Activated CD4-positive, alpha-beta T cell treated with anti-CD3 and anti-CD28 coated beads, Interleukin-2, amount 10 ng/mL, durations not matched to agents 24 days and 14 days (primary cell): ENCODE measurements at regions of chr14 and their contacts with region 1.

Region 1: GRCh38 chr14:36580856-36581831 is 1.3 kb downstream of the NKX2-8 start:
- DNase-seq: peak; percentile 60
- H3K4me3 Mint-ChIP-seq: no peak overlapping the region
- H3K27ac Mint-ChIP-seq: no peak overlapping the region
- H3K4me1 Mint-ChIP-seq: no peaks in the 10 kb centered on the region
- H3K27me3 Mint-ChIP-seq: peaks cover 61% of the 10 kb centered on the region

Region 2: DNA sequence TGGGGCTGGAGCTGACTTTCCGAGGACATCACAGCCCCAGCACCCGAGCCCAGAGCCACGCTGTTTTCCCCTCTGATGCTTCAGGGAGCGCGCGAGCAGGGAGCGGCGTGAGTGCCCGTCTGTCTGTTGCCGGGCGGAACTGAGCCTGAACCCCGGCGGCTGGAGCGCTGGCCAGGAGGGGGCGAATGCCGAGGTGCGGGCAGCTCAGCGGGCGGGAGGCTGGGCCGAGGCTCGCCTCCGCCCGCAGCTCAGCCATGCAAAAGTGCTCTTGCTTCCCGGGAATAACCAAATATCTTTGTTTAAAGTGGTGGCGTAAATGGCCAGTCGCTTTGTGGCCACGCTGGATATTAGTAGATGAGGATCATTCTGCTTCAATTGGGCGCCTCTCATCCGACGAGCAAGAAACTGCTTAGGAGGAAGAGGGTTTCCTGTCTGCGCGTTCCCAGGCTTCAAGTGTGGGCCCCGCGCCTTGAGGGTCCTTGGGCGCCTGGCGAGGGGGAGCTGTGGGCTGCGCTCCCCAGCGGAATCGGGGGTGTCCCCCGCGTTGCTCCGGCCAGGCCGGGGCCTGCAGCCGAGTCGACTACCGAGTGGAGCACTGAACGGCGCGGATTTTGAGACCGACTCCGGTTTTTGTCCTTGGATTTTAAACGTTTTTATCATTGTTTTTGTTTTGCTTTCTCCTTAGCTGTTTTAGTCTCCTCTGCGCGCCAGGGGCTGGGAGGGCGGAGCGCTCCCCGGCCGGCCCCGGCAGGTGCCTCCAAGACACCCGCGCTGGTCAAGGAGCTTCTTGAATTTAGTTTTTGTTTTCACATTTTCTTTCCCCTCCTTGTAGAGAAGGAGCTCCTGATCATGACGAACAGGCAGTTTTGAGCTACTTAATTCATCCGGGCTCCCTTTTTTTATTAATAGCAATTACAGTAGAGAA is 60.3 kb before region 1 on chr14:
- intact Hi-C with region 1: loop called (anchors 5 kb)
- DNase-seq: no peak
- H3K4me3 Mint-ChIP-seq: no peak overlapping the region
- H3K27ac Mint-ChIP-seq: no peak overlapping the region
- H3K4me1 Mint-ChIP-seq: peaks cover 2% of the 10 kb centered on the region
- H3K27me3 Mint-ChIP-seq: peaks cover 71% of the 10 kb centered on the region

Region 3: DNA sequence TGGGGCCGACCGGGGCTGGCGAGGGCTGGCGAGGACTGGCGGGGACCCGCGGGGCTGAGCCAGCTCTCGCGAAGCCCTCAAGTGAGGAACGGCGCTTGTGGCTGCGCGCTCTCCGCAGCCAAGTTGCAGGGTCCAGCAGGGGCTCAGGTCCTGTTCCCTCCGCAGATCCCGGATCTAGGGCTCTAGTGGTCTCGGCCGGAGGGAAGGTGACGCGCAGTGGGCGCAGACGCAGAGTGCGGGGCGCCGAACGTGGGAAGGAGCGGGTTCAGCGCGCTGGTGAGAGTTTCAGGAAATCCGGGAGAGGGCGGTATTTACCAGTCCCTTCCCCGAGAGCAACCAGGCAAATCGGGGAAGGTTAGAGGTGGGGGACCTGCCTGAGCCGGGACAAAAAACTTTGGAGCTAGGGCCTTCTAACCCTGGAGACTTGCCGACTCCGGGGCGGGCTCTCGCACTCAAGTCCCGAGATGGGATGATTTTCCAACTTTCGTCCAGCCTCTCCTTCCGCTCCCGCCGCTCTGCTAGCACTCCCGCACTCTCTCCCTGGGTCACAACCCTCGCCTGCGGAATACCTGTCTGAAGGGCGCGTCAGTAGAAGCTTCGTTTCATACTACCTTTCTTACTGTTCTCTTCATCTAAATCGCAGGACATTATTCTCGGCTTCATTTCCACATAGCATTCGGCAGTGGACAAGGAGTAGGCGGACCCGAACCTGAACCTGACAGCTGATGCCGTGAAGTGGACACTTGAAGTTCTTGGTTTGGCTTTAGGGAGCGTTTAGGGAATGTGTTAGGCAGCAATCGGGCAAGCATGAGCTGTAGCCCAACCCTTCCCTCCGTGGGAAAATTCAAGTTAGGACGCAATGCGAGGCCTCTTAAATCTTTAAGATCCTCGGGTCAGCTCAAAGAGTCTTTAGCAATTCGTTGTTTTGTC is 66.9 kb after region 1 on chr14:
- intact Hi-C with region 1: loop called (anchors 2 kb)
- DNase-seq: no peak
- H3K4me3 Mint-ChIP-seq: no peak overlapping the region
- H3K27ac Mint-ChIP-seq: peak overlapping the region; percentile 25
- H3K4me1 Mint-ChIP-seq: no peaks in the 10 kb centered on the region
- H3K27me3 Mint-ChIP-seq: peaks cover 57% of the 10 kb centered on the region

Region 4: GRCh38 chr14:36661756-36662498 is 80.8 kb after region 1 on chr14 and contains the start of gene PAX9:
- intact Hi-C with region 1: loop called (anchors 1 kb)
- DNase-seq: peak; percentile 64
- H3K4me3 Mint-ChIP-seq: peak within 1 kb of the TSS; percentile 15
- H3K27ac Mint-ChIP-seq: peak within 1 kb of the TSS; percentile 65
- H3K4me1 Mint-ChIP-seq: peaks cover 10% of the 10 kb centered on the region
- H3K27me3 Mint-ChIP-seq: peaks cover 87% of the 10 kb centered on the region
- total RNA-seq, gene PAX9: not detected in 2 replicates

Region 5: GRCh38 chr14:37594238-37594914 is 1013.2 kb after region 1 on chr14:
- intact Hi-C with region 1: loop called (anchors 5 kb)
- DNase-seq: peak; percentile 70
- H3K4me3 Mint-ChIP-seq: peak overlapping the region; percentile 62
- H3K27ac Mint-ChIP-seq: peak overlapping the region; percentile 76
- H3K4me1 Mint-ChIP-seq: peaks cover 9% of the 10 kb centered on the region
- H3K27me3 Mint-ChIP-seq: peaks cover 72% of the 10 kb centered on the region

Region 6: GRCh38 chr14:38210587-38211216 is 1629.6 kb after region 1 on chr14:
- intact Hi-C with region 1: loop called (anchors 10 kb)
- DNase-seq: no peak
- H3K4me3 Mint-ChIP-seq: no peak overlapping the region
- H3K27ac Mint-ChIP-seq: no peak overlapping the region
- H3K4me1 Mint-ChIP-seq: peaks cover 3% of the 10 kb centered on the region
- H3K27me3 Mint-ChIP-seq: peaks cover 67% of the 10 kb centered on the region